ENCODE measurements at regions of chr11 and their contacts with region 1.

Region 1: GRCh38 chr11:93734427-93735222 is 6.7 kb downstream of the TAF1D start:
- H3K4me3 Mint-ChIP-seq: no peak overlapping the region
- H3K27ac Mint-ChIP-seq: no peak overlapping the region
- H3K4me1 Mint-ChIP-seq: peaks cover 31% of the 10 kb centered on the region
- H3K27me3 Mint-ChIP-seq: no peaks in the 10 kb centered on the region

Region 2: GRCh38 chr11:93672280-93672679 is 62.3 kb before region 1 on chr11:
- intact Hi-C with region 1: loop called (anchors 5 kb)
- H3K4me3 Mint-ChIP-seq: no peak overlapping the region
- H3K27ac Mint-ChIP-seq: no peak overlapping the region
- H3K4me1 Mint-ChIP-seq: peaks cover 5% of the 10 kb centered on the region
- H3K27me3 Mint-ChIP-seq: no peaks in the 10 kb centered on the region

Region 3: DNA sequence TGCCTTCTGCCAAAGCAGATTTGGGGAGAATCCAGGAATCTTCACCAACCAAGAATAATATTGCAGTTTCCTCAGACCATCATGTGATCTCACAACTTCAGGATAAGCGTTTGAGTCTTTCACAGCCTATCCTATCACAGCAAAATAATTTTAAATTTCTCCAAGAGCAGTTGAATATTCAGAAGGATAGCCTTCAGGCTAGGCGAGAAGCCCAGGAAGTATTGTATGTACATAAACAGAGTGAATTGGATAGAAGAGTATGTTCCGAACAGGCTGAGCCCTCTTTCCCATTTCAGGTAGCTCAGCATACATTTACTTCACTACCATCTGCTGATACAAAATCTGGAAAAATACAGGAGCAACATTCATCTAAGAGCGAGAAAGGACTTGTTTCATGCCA is 37.0 kb before region 1 on chr11:
- intact Hi-C with region 1: loop called (anchors 5 kb)
- H3K4me3 Mint-ChIP-seq: no peak overlapping the region
- H3K27ac Mint-ChIP-seq: no peak overlapping the region
- H3K4me1 Mint-ChIP-seq: no peaks in the 10 kb centered on the region
- H3K27me3 Mint-ChIP-seq: no peaks in the 10 kb centered on the region

Region 4: GRCh38 chr11:93784152-93784934 is 49.7 kb after region 1 on chr11 and contains the start of gene MED17:
- intact Hi-C with region 1: no loop called
- H3K4me3 Mint-ChIP-seq: peak within 1 kb of the TSS; percentile 88
- H3K27ac Mint-ChIP-seq: peak within 1 kb of the TSS; percentile 90
- H3K4me1 Mint-ChIP-seq: peaks cover 31% of the 10 kb centered on the region
- H3K27me3 Mint-ChIP-seq: no peaks in the 10 kb centered on the region

Measured in dendritic cell treated with granulocyte-macrophage colony-stimulating factor and Interleukin-4, amounts not matched to agents 40 ng/mL and 50 ng/mL, for 4 days (primary cell).